Heart right ventricle (tissue), 16 donors: ENCODE measurements at regions of chr1 and their contacts with region 1.

Region 1: DNA sequence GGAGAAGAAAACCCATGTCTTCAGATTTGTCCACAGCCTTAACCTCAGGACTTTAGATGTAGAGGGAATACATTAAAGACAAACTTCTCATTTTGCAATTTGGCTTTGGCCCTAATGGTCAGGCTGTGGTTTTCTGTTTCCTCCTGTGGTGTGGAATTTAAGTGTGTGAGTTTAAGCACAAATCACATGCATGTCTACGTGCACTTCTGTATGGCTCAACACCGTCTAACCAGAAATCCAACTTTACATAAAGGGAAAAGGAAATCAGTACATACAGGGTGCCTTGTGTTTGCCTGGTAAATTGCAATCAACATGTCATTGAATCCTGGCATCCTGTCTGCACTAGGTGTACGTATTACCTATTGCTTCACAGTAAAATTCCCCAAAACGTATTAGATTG is 1.2 kb upstream of the ZNF124 start:
- DNase-seq: no peak
- ATAC-seq: no peak
- H3K4me3 ChIP-seq: no peak overlapping the region
- H3K27ac ChIP-seq: no peak overlapping the region
- H3K4me1 ChIP-seq: peaks cover 0 to 16% (median 0%) of the 10 kb centered on the region in 9 donors
- H3K27me3 ChIP-seq: no peaks in the 10 kb centered on the region
- CTCF ChIP-seq: no peak

Region 2: DNA sequence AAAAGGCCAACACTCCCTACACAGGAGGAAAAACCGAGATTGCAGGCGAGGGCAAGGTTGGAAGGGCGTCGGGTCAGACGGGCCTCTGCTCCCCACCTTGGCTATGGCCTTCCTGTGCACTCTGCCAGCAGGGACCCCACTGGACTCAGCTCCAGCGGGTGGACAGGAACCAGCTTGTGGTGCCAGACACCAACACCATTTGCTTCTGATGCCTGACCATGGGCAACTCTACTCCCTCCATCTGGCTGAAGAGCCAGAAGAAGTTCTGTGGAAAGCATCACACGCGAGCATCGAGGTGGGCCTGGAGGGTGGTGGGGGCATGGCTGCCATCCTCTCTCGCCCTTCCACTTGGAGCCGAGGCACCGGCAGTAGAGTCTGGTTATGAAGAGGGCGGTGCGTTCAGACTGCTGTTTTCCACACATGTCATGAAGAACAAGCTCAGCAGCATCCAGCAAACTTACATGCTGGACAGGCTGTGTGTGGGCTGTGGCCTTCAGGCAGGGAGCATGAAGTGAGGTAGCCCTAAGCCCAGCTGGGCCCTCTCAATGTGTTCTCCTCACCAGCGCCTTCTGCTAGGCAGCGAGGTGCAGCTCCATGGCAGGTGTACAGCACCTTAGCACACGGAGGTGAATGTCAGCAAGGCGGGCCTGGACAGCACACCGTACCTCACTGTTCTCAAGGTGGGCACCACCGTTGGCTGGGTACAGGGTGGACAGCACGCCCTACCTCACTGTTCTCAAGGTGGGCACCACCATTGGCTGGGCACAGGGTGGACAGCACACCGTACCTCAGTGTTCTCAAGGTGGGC is 53.2 kb before region 1 on chr1:
- intact Hi-C with region 1: loop called in 7 of 10 experiments (anchors 5 kb)
- DNase-seq: no peak
- ATAC-seq: peak in 1 of 8 donors; percentile 59
- H3K4me3 ChIP-seq: no peak overlapping the region
- H3K27ac ChIP-seq: no peak overlapping the region
- H3K4me1 ChIP-seq: no peaks in the 10 kb centered on the region
- H3K27me3 ChIP-seq: no peaks in the 10 kb centered on the region
- CTCF ChIP-seq: no peak

Region 3: DNA sequence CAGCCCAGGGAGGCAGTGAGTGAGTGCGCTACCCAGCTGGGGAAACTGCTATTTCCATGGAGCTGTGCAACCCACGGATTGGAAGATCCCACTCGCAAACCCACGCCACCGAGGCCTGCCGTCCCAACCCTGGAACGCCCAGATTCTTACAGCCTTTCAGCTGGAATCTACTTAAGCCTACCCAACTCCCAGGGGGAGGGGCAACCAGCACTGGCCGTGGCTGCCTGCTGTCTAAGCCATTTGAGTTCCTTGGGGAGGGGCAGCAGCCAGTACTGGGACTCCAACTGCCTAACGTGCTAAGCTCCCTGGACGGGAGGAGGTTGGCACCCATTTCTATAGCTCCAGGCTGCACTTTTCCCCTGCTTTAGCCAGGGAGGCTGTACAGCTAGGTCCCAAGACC is 41.8 kb before region 1 on chr1:
- intact Hi-C with region 1: loop called in 6 of 10 experiments (anchors 5 kb)
- DNase-seq: no peak
- ATAC-seq: no peak
- H3K4me3 ChIP-seq: no peak overlapping the region
- H3K27ac ChIP-seq: no peak overlapping the region
- H3K4me1 ChIP-seq: peaks cover 0 to 6% (median 0%) of the 10 kb centered on the region in 9 donors
- H3K27me3 ChIP-seq: no peaks in the 10 kb centered on the region
- CTCF ChIP-seq: no peak